SK-N-SH (cell line): ENCODE measurements at regions of chr5 and their contacts with region 1.

Region 1: GRCh38 chr5:177425801-177426565 is 493 bp upstream of the GRK6 start:
- DNase-seq: peak; percentile 99
- H3K4me3 ChIP-seq: peak overlapping the region; percentile 53 to 68
- H3K27ac ChIP-seq: peak overlapping the region; percentile 89 to 92
- H3K4me1 ChIP-seq: peaks cover 5 to 33% of the 10 kb centered on the region in 2 experiments; a peak in 2 of 4 replicates
- H3K27me3 ChIP-seq: no peaks in the 10 kb centered on the region
- CTCF ChIP-seq: no peak
- EP300 ChIP-seq: no peak
- RAD21 ChIP-seq: no peak

Region 2: GRCh38 chr5:177209610-177210009 is 216.4 kb before region 1 on chr5:
- CTCF ChIA-PET with region 1: no interaction called
- POLR2A ChIA-PET with region 1: no interaction called
- DNase-seq: no peak
- H3K4me3 ChIP-seq: no peak overlapping the region
- H3K27ac ChIP-seq: no peak overlapping the region
- H3K4me1 ChIP-seq: no peaks in the 10 kb centered on the region
- H3K27me3 ChIP-seq: no peaks in the 10 kb centered on the region
- CTCF ChIP-seq: no peak
- EP300 ChIP-seq: no peak
- RAD21 ChIP-seq: no peak

Region 3: DNA sequence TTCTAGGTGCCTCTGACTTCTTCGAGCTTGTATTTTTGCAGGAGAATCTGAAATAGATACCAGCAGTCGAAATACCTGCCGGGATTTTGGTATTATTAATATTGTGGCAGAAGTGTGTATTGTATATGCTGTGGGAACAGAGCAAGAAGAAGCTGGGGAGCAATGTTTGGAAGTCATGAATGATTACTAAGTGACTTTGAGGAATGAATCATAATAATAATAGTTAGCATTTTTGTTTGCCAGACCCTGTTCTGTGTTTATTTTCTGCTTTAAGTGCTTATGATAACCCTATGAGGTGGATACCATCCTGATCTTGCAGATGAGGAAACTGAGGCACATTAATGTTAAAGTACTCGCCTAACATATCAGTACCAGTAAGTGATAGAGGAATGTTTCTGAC is 154.9 kb before region 1 on chr5:
- CTCF ChIA-PET with region 1: no interaction called
- POLR2A ChIA-PET with region 1: no interaction called
- DNase-seq: no peak
- H3K4me3 ChIP-seq: no peak overlapping the region
- H3K27ac ChIP-seq: no peak overlapping the region
- H3K4me1 ChIP-seq: peaks cover 0 to 12% of the 10 kb centered on the region in 2 experiments; a peak in 1 of 4 replicates
- H3K27me3 ChIP-seq: no peaks in the 10 kb centered on the region
- CTCF ChIP-seq: no peak
- EP300 ChIP-seq: no peak
- RAD21 ChIP-seq: no peak

Region 4: GRCh38 chr5:177446200-177447065 is 20.4 kb after region 1 on chr5 and contains the start of gene PRR7:
- CTCF ChIA-PET with region 1: interaction called, 7 read pairs
- POLR2A ChIA-PET with region 1: interaction called, 16 read pairs
- DNase-seq: peak; percentile 95
- H3K4me3 ChIP-seq: peak within 1 kb of the TSS; percentile 69 to 77
- H3K27ac ChIP-seq: peak within 1 kb of the TSS; percentile 93 to 96
- H3K4me1 ChIP-seq: peaks cover 23 to 41% of the 10 kb centered on the region in 2 experiments
- H3K27me3 ChIP-seq: no peaks in the 10 kb centered on the region
- CTCF ChIP-seq: no peak
- EP300 ChIP-seq: no peak
- RAD21 ChIP-seq: no peak
- polyA plus RNA-seq, gene PRR7: 12.5 and 17.1 TPM in 2 replicates